ENCODE measurements at regions of chr19 and their contacts with region 1.

Region 1: GRCh38 chr19:10870955-10871603 is at the start of gene CARM1:
- H3K4me3 ChIP-seq: peak within 1 kb of the TSS; percentile 88
- H3K27ac ChIP-seq: peak within 1 kb of the TSS; percentile 94
- H3K4me1 ChIP-seq: no peaks in the 10 kb centered on the region
- CTCF ChIP-seq: no peak

Region 2: DNA sequence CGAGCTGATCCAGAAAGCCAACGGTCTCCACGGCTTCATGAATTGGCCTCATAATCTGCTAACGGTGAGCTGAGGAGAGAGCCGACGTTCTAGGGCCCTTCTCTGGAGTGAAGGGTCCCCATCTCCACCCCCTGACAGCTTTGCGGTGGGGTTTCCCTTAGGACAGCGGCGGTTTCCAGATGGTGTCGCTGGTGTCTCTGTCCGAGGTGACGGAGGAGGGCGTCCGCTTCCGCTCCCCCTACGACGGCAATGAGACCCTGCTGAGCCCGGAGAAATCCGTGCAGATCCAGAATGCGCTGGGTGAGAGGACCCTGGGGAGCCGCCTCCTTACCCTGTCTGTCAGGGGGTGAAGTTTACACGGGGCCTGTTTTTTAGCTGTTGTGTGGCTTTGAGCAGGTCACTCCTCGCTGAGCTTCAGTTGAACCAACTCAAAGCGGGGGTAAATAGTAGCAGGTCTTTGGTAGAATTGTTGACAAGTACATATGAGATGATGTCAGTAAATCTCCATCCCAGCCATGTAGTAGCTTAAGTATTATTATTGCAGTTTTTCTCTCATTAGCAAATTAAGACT is 169.0 kb before region 1 on chr19:
- CTCF ChIA-PET with region 1: no interaction called
- POLR2A ChIA-PET with region 1: no interaction called
- H3K4me3 ChIP-seq: peak overlapping the region; percentile 89
- H3K27ac ChIP-seq: peak overlapping the region; percentile 42; the same call in 1 of the 2 replicates
- H3K4me1 ChIP-seq: 0 out of 2 replicates have a peak, but pooled peaks cover 3% of the 10 kb centered on the region
- CTCF ChIP-seq: peak; percentile 47

Region 3: GRCh38 chr19:10858204-10858828 is 12.8 kb before region 1 on chr19:
- CTCF ChIA-PET with region 1: interaction called, 20 read pairs
- POLR2A ChIA-PET with region 1: interaction called, 3 read pairs
- H3K4me3 ChIP-seq: no peak overlapping the region
- H3K27ac ChIP-seq: no peak overlapping the region
- H3K4me1 ChIP-seq: no peaks in the 10 kb centered on the region
- CTCF ChIP-seq: peak; percentile 54